Cardiac septum (tissue), 1 donor: ENCODE measurements at regions of chr9 and their contacts with region 1.

Region 1: DNA sequence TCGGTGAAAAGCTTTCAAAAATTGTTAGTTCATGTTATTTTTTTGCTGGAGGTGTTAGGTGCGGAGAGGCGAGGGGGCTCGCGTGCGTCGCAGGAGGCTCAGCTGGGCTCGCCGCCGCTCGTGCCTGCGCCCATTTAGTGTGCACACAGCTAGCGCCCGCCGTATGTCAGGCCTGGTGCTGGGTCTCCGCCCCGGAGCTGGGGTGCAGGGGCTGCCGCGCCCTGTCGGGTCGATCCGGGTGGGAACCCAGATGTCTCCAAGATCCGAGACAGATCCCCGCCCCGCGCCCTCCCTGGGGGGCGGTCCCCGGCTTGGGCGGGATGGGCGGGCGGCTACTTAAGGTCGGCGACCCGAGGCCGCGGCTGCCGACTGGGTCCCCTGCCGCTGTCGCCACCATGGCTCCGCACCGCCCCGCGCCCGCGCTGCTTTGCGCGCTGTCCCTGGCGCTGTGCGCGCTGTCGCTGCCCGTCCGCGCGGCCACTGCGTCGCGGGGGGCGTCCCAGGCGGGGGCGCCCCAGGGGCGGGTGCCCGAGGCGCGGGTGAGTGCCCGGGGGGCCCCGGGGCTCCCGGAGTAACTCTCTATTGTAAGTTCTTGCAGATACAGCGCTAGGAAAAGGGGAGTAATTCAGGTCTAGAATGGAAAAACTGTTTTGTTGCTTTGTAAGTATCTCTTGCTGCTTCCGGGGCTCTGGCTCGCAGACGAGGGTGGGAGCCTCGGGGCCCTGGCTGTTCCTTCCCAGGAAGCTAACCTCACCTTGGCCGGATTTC is 31.7 kb downstream of the GSN start:
- DNase-seq: peak; percentile 91

Region 2: DNA sequence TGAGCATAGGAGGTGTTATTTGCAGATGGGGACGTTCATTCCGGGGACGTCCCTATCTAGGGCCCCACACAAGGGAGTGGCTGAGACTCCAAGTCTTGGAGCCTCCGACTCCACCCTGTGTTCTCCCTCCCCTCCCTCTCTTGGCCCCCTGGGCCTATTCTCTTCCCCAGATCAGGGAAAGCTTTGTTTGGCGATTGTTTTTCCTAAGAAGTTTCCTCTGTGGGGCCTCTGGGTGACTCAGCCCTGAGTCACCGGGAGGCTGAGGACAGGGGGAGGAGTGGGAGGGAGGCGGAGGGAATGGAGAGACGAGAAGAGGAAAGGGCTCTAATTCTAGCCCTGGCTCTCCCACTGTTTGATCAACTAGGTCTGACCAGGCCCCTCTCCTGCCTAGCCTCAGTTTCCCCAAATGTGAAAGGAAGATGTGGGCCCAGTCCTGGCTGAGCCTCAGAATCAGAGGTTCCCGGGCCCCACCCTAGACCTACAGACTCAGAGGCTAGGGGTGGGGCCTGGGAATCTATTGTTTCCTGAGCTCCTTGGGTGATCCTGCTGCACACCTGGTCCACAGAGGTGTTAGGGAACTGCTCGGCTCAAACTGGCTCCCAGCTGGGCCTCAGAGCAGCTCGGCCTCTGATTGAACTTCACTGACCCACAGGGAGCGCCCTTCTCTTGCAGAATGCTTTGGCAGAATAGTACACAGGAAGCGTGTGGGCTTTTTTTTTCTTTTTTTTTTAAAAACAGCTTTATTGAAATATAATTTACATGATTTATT is 12.5 kb before region 1 on chr9:
- intact Hi-C with region 1: loop called (anchors 1 kb)
- DNase-seq: peak; percentile 93

Region 3: DNA sequence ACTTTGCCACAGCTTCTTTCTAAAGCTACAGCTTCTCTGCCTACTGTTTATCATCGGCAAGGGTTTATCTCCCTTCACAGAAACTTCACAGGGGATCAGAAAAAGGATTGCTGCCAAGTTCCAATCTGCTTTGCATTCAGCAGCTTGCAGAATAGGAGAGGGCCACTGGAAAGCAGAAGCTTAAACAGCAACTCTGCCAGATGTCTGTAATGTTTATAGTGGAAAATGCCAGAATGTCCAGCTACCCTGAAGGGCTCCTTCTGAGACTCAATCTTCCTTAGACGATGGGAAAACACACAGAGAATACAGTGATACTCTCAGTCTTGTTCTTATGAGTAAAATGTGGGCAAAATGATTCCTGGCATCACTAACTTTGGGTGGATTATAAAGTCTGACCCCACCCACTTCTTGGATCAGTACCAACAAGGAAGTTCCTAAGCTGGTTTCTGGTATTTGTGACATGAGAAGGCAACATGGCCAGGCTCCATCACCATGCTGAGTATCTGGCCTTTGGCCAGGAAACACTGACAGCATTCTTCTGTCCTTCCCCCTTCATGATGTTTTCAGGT is 51.4 kb after region 1 on chr9:
- intact Hi-C with region 1: no loop called
- DNase-seq: peak; percentile 82